RWPE1 (cell line): ENCODE measurements at regions of chr14 and their contacts with region 1.

Region 1: DNA sequence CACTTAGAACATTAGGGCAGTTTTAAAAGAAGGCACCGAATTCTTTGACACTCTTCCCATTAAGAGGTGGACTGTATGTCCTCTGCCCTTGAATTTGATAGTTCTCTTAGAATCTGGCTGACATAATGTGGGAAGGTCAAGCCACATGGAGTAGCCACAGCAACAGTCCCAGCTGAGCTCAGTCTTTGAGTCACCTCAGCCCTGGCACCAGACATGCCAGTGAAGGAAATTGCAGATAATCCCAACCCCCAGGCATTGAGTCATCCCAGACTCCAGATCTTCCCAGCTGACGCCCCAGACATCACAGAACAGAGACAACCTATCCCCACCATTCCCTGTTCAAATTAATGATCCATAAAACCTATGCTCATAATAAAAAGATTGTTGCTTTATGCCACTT is 83.4 kb downstream of the GTF2A1 start:
- DNase-seq: peak; percentile 77
- H3K27ac ChIP-seq: no peak overlapping the region
- CTCF ChIP-seq: no peak

Region 2: DNA sequence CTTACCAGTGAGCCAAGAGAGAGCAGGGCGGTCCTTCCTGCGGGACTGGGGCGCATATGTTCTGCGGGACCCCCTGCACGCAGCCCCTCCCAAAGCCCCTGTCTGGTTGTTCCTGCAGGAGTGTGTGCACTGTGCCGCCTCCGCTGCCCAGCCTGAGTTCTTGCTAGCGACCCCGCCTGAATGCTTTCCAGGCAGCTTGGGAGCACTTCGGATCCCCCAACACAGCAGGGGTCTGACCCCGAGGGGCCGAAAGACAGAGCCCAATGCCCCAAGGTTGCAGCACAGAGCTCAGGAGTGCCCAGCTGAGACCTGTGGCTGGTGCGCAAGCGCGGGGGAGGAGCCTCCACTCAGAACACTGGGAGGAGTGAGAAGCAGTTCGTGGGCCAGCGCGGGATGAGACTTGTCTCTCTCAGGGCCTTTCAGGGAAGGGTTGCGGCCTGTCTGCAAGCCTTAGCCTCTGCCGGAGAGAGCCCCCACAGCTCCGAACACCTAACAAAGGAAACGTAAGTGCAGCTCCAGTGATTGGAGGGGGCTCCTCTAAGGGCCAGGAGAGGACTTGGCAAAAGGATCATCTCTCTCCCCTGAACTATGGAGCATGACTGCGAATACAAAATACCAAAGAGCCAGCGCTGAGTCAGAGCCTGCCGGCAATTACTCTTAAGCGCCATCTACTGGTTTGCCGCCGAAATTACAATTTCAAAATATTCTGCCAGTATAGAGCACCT is 33.0 kb after region 1 on chr14:
- CTCF ChIA-PET with region 1: interaction called, 10 read pairs
- POLR2A ChIA-PET with region 1: no interaction called
- DNase-seq: peak; percentile 85
- H3K27ac ChIP-seq: peak overlapping the region; percentile 91
- CTCF ChIP-seq: peak; percentile 89